A549 (cell line): ENCODE measurements at regions of chr5 and their contacts with region 1.

Region 1: GRCh38 chr5:137498736-137499505 is at the start of gene SPOCK1:
- DNase-seq: peak; percentile 75 to 80
- ATAC-seq: peak; percentile 91 to 97
- H3K4me3 ChIP-seq: peak within 1 kb of the TSS; percentile 54
- H3K27ac ChIP-seq: peak within 1 kb of the TSS; percentile 60 to 83
- H3K4me1 ChIP-seq: no peaks in the 10 kb centered on the region
- CTCF ChIP-seq: peak; percentile 89
- EP300 ChIP-seq: no peak
- POLR2A ChIP-seq: no peak
- RAD21 ChIP-seq: peak; percentile 72 to 94
- polyA plus RNA-seq, gene SPOCK1: 33.8 and 40.8 TPM in 2 replicates

Region 2: GRCh38 chr5:136802383-136802782 is 696.5 kb before region 1 on chr5:
- CTCF ChIA-PET with region 1: interaction called, 19 read pairs
- POLR2A ChIA-PET with region 1: no interaction called
- DNase-seq: peak; percentile 5 to 24
- ATAC-seq: no peak; a peak in 1 of 6 replicates
- H3K4me3 ChIP-seq: no peak overlapping the region
- H3K27ac ChIP-seq: no peak overlapping the region
- H3K4me1 ChIP-seq: no peaks in the 10 kb centered on the region
- CTCF ChIP-seq: peak; percentile 51
- EP300 ChIP-seq: no peak
- POLR2A ChIP-seq: no peak
- RAD21 ChIP-seq: peak; percentile 62 to 71

Region 3: DNA sequence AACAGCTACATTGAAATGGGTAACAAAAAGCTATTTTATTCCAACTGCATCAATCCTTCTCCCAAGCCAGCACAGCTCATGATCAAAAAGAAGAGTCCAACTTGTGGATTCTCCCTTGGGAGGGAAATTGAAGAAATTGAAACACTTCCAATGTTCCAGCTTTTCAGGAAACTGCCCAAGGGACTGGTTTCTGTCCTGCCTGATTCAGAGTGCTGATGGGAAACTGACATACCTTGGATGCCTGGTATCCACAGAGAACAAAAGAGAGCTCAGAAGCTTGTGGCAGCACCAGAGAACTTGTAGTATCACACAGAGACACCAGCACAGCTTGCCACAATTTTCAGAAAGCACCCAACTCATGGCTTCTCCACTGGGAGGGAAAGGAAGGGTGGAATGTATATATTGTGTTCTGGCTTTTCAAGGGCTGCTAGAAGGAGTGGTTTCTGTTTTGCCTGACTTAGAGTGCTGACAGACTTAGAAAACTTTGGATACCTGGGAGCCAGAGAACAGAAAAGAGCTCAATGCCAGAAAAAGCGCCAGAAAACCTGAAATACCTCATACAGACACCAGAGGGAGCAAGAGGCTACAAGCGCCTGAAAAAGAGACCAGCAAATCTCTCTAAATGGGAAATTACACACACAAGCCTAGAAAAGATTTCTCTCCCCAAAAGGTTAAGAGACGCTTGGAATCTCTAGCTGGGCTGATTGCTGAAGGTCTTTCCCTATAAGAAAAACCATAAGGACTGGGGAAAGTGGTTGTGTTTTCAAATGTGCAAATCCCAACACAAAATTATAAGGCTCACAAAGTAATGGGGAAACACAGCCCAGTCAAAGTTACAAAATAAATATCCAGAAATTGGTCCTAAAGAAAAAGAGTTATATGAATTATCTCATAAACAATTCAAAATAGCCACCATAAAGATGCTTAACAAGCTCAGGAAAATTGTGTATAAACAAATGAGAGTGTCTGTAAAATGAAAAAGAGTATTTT is 178.6 kb before region 1 on chr5:
- CTCF ChIA-PET with region 1: interaction called, 114 read pairs
- POLR2A ChIA-PET with region 1: no interaction called
- DNase-seq: peak; percentile 54 to 64
- ATAC-seq: peak; percentile 34 to 72; a peak in 3 of 6 replicates
- H3K4me3 ChIP-seq: no peak overlapping the region
- H3K27ac ChIP-seq: no peak overlapping the region
- H3K4me1 ChIP-seq: peaks cover 7% of the 10 kb centered on the region; the same call in 2 of the 3 replicates
- CTCF ChIP-seq: peak; percentile 85
- EP300 ChIP-seq: no peak
- POLR2A ChIP-seq: no peak
- RAD21 ChIP-seq: peak; percentile 78 to 81

Region 4: DNA sequence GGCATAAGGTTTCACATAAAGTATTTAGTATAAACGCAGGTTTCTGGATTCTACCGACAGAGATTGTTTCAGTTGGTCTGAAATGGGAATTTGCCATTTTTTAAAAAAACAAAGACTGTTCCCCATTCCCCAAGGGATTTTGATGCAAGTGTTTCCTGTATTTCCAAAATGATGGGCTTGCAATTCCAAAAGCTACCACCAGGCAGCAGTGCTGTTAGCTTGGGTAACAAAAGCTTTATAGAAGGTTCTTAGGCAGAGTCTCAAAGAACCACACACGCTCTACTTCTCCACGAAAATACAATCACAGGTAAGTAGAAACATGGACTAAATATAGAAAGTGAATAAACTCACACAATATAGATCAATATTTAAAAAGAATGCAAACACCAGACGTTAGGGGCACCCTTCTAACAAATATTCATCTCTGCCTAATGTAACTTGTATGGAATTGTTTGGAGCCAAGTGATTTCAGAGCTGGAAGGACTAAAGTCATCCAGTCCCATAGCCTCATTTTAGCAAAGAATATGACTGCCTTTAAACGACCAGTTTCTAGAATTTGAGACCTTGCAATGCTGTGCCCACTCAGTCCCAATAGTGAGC is 154.1 kb before region 1 on chr5:
- CTCF ChIA-PET with region 1: interaction called, 41 read pairs
- POLR2A ChIA-PET with region 1: no interaction called
- DNase-seq: peak; percentile 18 to 60
- ATAC-seq: peak in 1 of 2 experiments; percentile 73; a peak in 4 of 6 replicates
- H3K4me3 ChIP-seq: no peak overlapping the region
- H3K27ac ChIP-seq: no peak overlapping the region
- H3K4me1 ChIP-seq: no peaks in the 10 kb centered on the region
- CTCF ChIP-seq: peak; percentile 72
- EP300 ChIP-seq: no peak
- POLR2A ChIP-seq: no peak
- RAD21 ChIP-seq: peak; percentile 65 to 82

Region 5: DNA sequence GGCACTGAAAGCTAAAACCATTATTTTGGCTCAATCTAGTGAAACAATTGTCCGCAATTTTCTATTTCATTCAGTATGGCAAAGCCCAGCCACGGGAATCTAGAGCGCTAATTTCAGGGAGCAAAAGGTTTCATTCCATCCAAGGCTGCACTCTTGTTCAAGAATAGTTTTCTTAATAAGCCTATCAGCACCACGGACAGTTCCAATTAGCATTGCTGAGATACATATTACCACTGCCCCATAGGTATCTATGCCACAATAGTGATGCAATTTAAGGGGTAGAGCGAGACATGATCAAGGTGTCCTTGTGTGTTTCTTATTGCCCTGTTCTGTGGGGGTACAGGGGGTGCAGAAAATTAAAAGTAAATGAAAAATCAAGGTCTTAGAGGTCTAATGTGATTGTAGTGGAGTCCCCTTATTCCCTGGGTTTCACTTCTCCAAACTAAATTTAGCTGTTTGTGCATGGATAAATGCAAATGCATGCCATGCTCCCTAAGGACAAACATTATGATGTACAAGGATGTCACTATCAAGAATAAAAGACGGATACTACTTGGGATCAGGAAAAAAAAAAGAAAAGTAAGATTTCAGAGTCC is 45.3 kb before region 1 on chr5:
- CTCF ChIA-PET with region 1: interaction called, 12 read pairs
- POLR2A ChIA-PET with region 1: no interaction called
- DNase-seq: peak in 1 of 2 experiments; percentile 43
- ATAC-seq: no peak
- H3K4me3 ChIP-seq: no peak overlapping the region
- H3K27ac ChIP-seq: no peak overlapping the region
- H3K4me1 ChIP-seq: no peaks in the 10 kb centered on the region
- CTCF ChIP-seq: no peak
- EP300 ChIP-seq: no peak
- POLR2A ChIP-seq: no peak
- RAD21 ChIP-seq: no peak